Heart left ventricle (tissue), 16 donors: ENCODE measurements at regions of chr6 and their contacts with region 1.

Region 1: DNA sequence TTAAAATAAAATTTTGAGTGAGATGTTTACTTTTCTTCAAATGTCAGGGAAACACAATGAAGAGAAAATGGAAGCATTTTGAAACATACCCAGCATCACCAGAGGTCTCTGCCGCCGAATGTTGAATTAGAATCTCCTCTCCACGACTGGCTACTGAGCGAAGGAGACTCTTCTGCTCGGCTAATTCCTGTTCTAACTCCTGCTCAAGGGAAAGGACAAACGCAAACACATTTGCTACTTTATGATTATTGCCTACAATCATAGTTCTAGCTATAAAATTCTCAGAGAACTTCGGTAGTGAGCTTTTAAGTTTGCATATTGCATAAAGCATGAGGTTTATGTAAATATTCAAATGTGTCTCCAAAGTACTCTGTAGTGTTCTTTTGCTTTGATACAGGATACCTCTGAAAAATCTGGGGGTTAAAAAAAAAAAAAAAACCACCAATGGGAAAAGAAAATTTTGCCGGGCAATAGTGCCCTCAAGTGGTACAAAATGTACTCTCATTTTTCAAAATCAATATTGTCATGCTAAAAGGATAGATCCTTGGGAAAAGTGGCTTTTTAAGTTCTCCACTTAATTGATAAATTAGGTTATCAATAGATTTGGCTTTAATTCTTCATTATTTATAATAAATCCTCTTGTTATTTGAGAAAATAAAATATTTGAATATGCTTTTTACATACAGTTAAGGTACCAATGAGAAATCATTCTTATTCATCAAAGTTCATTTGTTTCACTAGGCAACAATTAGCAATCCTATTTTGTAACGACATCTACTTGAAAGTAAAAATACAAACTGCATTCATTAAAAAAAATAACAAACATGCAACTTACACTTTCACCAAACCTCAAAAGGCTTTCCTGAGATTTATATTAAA is 369.0 kb downstream of the SYNE1 start:
- DNase-seq: no peak
- ATAC-seq: no peak
- H3K4me3 ChIP-seq: no peak overlapping the region
- H3K27ac ChIP-seq: peak overlapping the region in 4 of 12 donors; percentile 0 to 17 (median 9)
- H3K4me1 ChIP-seq: peaks cover 6 to 54% (median 37%) of the 10 kb centered on the region in 12 donors
- H3K27me3 ChIP-seq: no peaks in the 10 kb centered on the region
- CTCF ChIP-seq: peak; percentile 30 to 73 (median 53)
- POLR2A ChIP-seq: no peak

Region 2: DNA sequence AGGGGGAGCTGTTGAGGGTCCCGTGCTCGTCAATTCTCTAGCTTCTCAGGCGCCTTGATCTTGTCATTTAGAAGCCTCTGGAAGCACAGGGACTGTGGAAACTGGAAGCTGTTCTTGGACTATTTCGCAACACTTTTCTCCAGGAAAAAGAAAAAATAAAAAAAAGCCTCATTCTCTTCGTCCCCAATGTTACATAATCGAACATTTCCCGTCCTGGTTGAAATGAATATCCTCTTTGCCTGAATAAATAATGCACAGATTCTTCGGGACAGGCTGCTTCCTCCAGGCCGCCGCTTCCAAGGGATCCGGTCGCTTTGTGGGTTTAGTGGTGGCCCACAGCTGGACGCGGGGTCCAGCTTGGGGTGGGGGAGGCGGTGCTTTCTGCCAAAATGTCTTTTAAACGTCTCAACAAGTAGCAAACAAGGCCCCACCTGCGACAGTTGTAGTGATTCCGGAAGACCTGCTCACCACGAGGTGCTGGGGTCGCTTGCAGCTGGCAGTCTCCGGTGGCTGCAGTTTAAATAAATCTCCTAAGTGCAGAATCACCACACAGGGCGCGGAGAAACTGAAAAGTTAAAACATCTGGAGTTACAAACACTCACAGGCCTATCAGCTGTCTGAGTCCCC is 586.7 kb before region 1 on chr6:
- intact Hi-C with region 1: loop called in 2 of 10 experiments (anchors 5 to 10 kb)
- DNase-seq: peak in 3 of 5 donors; percentile 14 to 27 (median 25)
- ATAC-seq: peak in 3 of 4 donors; percentile 28 to 57 (median 53)
- H3K4me3 ChIP-seq: peak overlapping the region in 6 of 12 donors; percentile 5 to 43 (median 30)
- H3K27ac ChIP-seq: peak overlapping the region in 11 of 12 donors; percentile 28 to 89 (median 64)
- H3K4me1 ChIP-seq: peaks cover 0 to 17% (median 0%) of the 10 kb centered on the region in 12 donors
- H3K27me3 ChIP-seq: peaks cover 0 to 3% (median 0%) of the 10 kb centered on the region in 9 donors
- CTCF ChIP-seq: no peak
- POLR2A ChIP-seq: no peak

Region 3: DNA sequence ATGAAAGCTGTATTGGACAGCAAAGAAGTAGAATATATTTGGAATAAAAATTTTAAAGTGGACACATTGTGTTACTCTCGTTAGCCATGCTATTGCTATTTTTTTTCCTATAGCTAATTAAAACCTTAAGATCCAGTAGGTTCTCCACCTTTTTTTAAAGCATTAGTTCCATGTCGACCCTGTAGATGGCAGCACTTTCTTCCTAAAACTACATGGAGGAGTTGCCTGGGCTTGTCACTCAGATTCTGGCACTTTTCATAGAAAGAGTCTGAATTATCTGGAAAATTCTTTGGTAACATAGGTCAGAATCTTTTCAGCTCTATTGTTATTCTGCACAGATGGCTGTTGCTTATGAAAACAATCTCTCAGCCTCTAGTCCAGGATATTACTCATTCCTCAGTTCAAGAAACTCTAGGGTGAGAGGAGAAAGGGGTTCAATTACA is 502.7 kb before region 1 on chr6:
- intact Hi-C with region 1: loop called in 7 of 10 experiments (anchors 5 to 10 kb)
- DNase-seq: peak in 4 of 5 donors; percentile 27 to 41 (median 32)
- ATAC-seq: peak in 3 of 4 donors; percentile 61 to 65 (median 61)
- H3K4me3 ChIP-seq: no peak overlapping the region
- H3K27ac ChIP-seq: no peak overlapping the region
- H3K4me1 ChIP-seq: peaks cover 0 to 12% (median 1%) of the 10 kb centered on the region in 12 donors
- H3K27me3 ChIP-seq: no peaks in the 10 kb centered on the region
- CTCF ChIP-seq: peak; percentile 58 to 81 (median 73)
- POLR2A ChIP-seq: no peak

Region 4: DNA sequence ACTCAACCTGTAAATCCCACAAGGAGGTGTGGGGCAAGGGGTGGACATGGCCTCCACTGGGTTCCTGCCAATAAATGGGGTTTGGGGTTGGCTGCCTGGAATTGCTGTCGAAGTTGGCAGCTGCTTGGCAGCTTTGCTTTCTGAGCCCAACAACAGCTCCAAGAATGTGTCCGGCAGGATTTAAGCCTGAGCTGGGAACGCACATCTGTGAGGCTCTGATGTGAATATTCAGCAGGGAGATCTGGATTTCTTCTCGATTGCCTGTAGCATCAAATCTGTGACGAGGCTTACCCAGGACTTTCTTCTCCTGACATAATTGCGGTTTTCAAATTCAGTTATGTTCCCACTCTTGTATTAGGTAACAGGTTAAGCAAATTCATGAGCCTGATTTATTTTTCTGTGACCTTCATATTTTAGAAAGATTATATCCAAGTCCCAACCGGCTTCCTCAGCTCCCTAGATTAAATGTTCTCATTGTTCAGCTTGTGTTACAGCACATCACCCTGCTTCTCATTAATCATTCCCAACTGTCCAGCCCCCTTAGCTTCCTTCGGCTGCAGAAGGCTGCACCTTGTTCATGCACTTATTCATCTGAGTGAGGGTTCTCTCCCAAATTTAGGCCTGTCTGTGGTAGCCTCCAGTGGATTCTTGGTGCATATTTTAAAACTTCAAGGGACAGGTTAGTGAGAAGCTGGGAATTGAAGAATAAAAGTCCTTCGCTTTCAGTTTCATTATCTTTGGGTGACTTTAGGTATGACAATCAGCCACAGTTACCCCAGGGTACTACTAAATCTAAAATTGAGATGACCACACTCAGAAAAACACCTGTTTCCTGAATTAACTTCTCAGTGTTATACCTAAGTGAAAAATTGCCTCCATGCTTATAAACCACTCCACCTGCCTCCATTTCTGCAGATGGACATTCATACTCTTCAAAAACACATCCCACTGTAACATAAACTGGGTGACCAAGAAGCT is 150.8 kb before region 1 on chr6:
- intact Hi-C with region 1: no loop called
- DNase-seq: no peak
- ATAC-seq: no peak
- H3K4me3 ChIP-seq: no peak overlapping the region
- H3K27ac ChIP-seq: no peak overlapping the region
- H3K4me1 ChIP-seq: peaks cover 0 to 23% (median 12%) of the 10 kb centered on the region in 12 donors
- H3K27me3 ChIP-seq: no peaks in the 10 kb centered on the region
- CTCF ChIP-seq: no peak
- POLR2A ChIP-seq: no peak

Region 5: DNA sequence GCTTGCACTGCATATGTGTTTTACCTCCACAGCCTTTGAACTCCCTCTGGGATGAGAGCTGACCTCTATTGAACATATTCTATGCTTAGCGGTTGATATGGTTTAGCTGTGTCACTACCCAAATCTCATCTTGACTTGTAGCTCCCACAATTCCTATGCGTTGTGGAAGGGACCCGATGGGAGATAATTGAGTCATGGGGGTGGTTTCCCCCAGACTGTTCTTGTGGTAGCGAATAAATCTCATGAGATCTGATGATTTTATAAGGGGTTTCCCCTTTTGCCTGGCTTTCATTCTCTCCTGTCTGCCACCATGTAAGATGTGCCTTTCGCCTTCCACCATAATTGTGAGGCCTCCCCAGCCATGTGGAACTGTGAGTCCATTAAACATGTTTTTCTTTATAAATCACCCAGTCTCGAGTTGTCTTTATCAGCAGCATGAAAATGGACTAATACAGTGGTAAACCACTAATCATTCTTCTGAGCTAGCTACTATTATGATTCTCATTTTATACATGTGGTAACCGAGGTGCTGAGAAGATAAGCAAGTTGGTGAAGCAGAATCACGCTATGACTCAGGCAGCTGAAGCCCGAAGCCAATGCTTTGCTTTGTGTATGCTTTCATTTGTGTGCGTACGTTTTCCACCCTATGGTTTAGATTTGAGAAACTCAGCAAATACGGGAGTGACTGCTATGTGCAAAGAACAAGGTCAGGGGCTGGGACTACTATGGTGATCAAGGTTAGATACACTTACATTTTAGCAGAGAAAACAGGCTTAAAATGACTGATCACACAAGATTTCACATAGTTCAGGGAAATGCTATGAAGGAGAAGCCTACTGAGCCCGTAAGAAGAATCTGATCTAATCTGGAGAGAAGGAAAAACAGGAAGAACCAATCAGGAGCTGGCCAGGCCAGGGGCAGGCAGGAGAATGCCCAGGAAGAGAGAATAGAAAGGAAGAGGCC is 97.2 kb before region 1 on chr6:
- intact Hi-C with region 1: loop called in 1 of 10 experiments (anchors 5 kb)
- DNase-seq: no peak
- ATAC-seq: peak in 2 of 4 donors; percentile 7 to 8
- H3K4me3 ChIP-seq: no peak overlapping the region
- H3K27ac ChIP-seq: peak overlapping the region in 11 of 12 donors; percentile 7 to 72 (median 52)
- H3K4me1 ChIP-seq: peaks cover 0 to 32% (median 11%) of the 10 kb centered on the region in 12 donors
- H3K27me3 ChIP-seq: no peaks in the 10 kb centered on the region
- CTCF ChIP-seq: no peak
- POLR2A ChIP-seq: no peak

Region 6: GRCh38 chr6:152218880-152219279 is 49.3 kb before region 1 on chr6:
- intact Hi-C with region 1: loop called in 1 of 10 experiments (anchors 10 kb)
- DNase-seq: no peak
- ATAC-seq: no peak
- H3K4me3 ChIP-seq: no peak overlapping the region
- H3K27ac ChIP-seq: no peak overlapping the region
- H3K4me1 ChIP-seq: peaks cover 0 to 17% (median 2%) of the 10 kb centered on the region in 12 donors
- H3K27me3 ChIP-seq: no peaks in the 10 kb centered on the region
- CTCF ChIP-seq: no peak
- POLR2A ChIP-seq: no peak